Left ventricle myocardium inferior (tissue), 1 donor: ENCODE measurements at regions of chr5 and their contacts with region 1.

Region 1: DNA sequence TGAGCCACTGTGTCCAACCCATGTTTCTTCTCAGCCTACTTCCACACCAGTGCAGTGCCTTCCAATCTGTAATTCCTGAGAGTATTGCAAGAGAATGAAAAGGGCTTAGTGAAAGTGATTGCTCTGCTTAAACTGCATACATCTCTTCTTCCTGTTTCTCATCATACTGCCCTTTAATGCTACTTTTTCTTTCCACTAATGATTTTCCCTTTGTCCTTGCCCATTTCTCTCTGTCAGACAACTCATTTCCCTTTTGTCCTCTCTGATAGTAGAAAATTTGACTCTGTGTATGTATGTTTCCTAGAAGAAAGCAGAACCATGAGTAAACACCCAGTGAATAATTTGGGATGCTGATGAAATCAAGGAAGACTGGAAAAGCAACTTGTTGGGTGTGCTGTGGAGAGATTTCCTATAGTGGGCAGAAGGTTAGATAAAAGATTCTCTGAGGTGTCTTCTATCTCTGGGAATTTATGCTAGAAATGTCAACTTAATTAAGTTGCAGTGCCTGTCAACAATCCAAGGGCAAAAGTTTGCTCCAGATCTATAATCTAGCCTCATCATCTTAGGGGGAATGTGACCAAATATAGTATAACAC is 102.2 kb upstream of the CHD1 start:
- DNase-seq: no peak
- H3K4me3 ChIP-seq: no peak overlapping the region
- H3K27ac ChIP-seq: no peak overlapping the region
- H3K4me1 ChIP-seq: peaks cover 8% of the 10 kb centered on the region
- H3K27me3 ChIP-seq: no peaks in the 10 kb centered on the region
- CTCF ChIP-seq: no peak

Region 2: GRCh38 chr5:98624145-98624880 is 406.7 kb before region 1 on chr5:
- intact Hi-C with region 1: no loop called
- DNase-seq: no peak
- H3K4me3 ChIP-seq: no peak overlapping the region
- H3K27ac ChIP-seq: no peak overlapping the region
- H3K4me1 ChIP-seq: no peaks in the 10 kb centered on the region
- H3K27me3 ChIP-seq: no peaks in the 10 kb centered on the region
- CTCF ChIP-seq: no peak

Region 3: DNA sequence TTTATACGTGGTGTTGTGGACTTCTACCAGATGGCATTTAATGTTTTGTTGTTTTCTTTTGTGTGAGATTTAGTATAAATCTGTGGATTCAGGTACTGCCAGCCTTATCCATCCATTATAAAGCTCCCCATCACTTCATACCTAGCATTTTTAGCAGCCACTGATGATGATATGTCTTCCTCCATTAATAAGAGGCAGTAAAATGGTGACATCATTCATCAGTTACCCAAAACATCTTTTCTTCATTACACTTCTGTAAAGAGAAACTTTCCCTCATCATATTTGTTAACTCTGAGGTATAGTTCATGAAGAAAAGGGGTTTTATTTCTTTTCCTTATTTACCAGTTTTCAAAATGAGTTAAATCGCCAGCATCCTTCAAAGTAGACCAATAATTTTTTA is 121.6 kb before region 1 on chr5:
- intact Hi-C with region 1: loop called (anchors 2 kb)
- DNase-seq: no peak
- H3K4me3 ChIP-seq: no peak overlapping the region
- H3K27ac ChIP-seq: no peak overlapping the region
- H3K4me1 ChIP-seq: peaks cover 50% of the 10 kb centered on the region
- H3K27me3 ChIP-seq: no peaks in the 10 kb centered on the region
- CTCF ChIP-seq: no peak

Region 4: GRCh38 chr5:99449786-99450185 is 418.8 kb after region 1 on chr5:
- intact Hi-C with region 1: no loop called
- DNase-seq: no peak
- H3K4me3 ChIP-seq: no peak overlapping the region
- H3K27ac ChIP-seq: no peak overlapping the region
- H3K4me1 ChIP-seq: no peaks in the 10 kb centered on the region
- H3K27me3 ChIP-seq: no peaks in the 10 kb centered on the region
- CTCF ChIP-seq: no peak